AG04449 (cell line): ENCODE measurements at regions of chr19 and their contacts with region 1.

Region 1: DNA sequence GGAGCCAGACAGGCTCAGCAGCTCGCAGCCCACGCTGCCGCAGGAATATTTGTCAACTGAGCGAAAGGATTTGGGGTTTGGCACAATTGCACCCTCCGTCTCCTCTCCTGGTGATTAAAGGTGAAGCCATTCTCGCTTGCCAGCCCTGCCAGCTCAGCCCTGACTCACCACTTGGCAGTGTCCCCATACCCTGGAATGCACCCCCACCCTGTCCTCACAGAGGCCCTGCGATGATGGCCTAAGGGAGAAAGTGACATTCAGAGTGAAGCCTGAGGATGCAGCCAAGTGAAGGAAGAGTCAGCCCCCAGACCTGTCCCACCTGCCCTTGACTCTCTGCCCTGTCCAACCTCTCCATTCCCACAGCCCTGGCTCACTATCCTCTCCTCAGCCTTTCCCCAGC is 18.8 kb downstream of the CYTH2 start:
- DNase-seq: peak; percentile 36
- H3K4me3 ChIP-seq: no peak overlapping the region
- CTCF ChIP-seq: no peak

Region 2: DNA sequence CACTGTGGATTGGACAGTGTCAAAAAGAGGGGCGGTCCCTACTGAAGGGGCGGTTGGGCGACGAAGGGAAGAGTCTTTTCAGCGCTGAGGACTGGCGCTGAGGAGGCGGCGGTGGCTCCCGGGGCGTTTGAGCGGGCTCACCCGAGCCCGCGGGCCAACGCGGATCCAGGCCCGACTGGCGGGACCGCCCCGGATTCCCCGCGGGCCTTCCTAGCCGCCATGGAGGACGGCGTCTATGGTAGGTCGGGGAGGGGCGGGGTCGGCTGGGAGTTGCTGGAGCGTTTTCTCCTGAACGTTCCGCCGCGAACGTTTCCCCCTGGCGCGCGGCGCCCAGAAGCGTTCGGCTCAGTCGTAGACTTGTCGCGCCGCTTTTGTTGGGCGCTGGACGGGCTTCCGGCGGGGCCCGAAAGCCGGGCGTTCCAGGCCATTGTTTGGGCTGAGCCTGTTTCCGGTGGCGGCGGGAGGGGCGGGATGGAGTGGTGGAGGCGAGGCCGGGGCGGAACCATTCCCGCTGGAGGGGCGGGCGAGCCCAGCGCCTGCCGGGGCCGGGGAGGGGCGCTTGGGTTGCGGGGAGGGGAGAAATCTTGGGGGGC is 18.6 kb before region 1 on chr19 and contains the start of gene CYTH2:
- CTCF ChIA-PET with region 1: interaction called, 29 read pairs
- POLR2A ChIA-PET with region 1: interaction called, 3 read pairs
- DNase-seq: no peak
- H3K4me3 ChIP-seq: peak within 1 kb of the TSS; percentile 84
- CTCF ChIP-seq: no peak